H1 (cell line): ENCODE measurements at regions of chrX and their contacts with region 1.

Region 1: DNA sequence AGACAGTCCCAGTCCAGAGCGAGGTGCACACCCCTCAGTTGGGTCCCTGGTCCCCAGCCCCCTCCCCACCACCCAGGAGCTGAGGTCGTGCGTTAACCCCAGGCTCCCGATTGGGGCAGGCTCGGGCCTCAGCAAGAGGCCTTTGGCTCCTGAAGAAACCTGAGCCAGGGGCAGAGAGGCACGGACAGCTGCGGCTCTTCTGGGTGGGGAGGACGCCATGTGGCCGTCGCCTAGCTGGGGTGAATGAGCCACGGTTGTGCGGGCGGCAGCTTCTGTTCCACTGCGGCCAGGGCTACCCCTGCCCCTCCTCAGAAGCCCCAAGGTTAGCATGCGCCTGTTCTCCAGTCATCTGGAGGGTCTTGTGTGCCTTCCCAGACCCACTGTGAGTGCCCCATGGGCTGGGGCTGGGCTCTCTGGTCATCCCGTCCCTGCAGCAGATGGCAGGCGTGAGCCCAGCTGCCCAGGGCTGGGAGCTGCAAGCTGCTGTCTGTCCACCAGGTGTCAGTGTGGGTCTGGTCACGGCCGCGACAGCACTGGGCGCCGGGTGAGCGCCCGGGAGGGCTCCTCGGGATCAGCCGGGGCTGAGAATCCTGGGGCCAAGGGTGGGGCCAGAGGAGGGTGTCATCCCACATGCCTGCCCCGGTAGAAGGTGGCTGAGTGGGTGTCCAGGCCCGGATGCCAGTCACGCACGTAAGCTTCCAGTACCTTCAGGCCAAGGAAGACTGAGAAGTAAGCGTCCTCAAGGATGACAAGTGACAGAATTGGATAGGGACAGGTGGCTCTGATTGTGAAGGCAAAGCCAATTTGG is 21.9 kb downstream of the ATP2B3 start:
- DNase-seq: peak; percentile 31 to 84
- H3K4me3 ChIP-seq: no peak overlapping the region
- H3K27ac ChIP-seq: no peak overlapping the region
- H3K4me1 ChIP-seq: no peaks in the 10 kb centered on the region; a peak in 1 of 7 replicates
- H3K27me3 ChIP-seq: no peaks in the 10 kb centered on the region
- CTCF ChIP-seq: peak in 2 of 3 experiments; percentile 92 to 99; a peak in 3 of 4 replicates
- EP300 ChIP-seq: no peak
- POLR2A ChIP-seq: no peak
- RAD21 ChIP-seq: peak; percentile 66 to 81

Region 2: DNA sequence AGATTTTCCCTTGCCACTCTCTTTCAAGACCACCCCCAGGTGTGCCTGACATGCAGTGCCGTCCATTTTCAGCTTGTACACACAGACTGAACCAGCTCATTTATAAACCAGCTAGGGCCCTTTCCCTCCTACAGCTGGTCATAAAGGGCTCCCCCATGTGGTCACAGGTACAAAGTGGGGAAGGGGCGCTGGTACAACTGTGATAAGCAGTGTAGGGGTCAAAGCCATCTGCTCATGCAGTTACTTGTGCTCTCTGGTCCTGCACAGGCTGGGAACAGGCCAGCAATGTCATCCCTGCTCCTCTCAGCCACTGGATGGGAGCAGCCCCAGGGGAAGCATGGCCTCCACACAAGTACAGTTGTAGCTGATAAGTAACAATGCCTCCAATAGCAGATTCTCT is 881.1 kb before region 1 on chrX:
- CTCF ChIA-PET with region 1: no interaction called
- POLR2A ChIA-PET with region 1: no interaction called
- DNase-seq: peak in 1 of 2 experiments; percentile 48
- H3K4me3 ChIP-seq: no peak overlapping the region
- H3K27ac ChIP-seq: no peak overlapping the region
- H3K4me1 ChIP-seq: no peaks in the 10 kb centered on the region
- H3K27me3 ChIP-seq: no peaks in the 10 kb centered on the region
- CTCF ChIP-seq: peak; percentile 38 to 60 (median 59)
- EP300 ChIP-seq: no peak
- POLR2A ChIP-seq: no peak
- RAD21 ChIP-seq: peak; percentile 37 to 53; a peak in 3 of 4 replicates

Region 3: DNA sequence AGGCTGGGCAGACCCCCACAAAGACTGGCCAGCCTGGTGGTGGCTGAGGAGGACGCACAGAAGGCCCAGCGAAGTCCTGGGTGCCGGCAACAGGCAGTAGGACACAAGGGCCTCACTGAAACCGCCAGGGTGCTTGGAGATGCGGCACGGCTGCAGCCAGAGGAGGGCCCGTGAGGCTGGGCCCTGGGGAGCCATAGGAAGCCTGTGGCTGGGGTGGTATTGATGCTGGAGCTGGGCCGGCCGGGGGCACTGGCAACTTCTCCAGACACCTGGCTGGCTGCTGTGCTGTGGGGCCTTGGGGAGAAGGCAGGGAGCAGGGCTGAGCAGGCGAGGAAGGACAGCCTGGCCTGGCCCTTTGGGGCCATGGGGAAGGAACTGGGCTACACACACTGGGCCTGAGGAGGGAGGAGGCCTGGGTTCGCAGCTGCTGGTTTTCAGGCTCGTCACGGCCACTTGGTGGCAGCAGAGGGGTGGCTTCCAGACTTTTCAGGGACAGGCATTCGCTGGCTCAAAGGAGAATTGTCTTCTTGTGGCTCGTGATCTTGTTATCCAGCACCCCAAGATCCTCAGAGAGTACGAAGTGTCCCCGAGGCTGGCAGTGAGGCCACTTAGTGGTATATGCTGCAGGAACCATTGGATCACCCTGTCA is 15.3 kb after region 1 on chrX:
- CTCF ChIA-PET with region 1: interaction called, 19 read pairs
- POLR2A ChIA-PET with region 1: no interaction called
- DNase-seq: peak in 1 of 2 experiments; percentile 69
- H3K4me3 ChIP-seq: no peak overlapping the region
- H3K27ac ChIP-seq: no peak overlapping the region
- H3K4me1 ChIP-seq: no peaks in the 10 kb centered on the region
- H3K27me3 ChIP-seq: no peaks in the 10 kb centered on the region; a peak in 1 of 7 replicates
- CTCF ChIP-seq: peak in 2 of 3 experiments; percentile 74 to 76; a peak in 3 of 4 replicates
- EP300 ChIP-seq: no peak
- POLR2A ChIP-seq: no peak
- RAD21 ChIP-seq: peak; percentile 63 to 76

Region 4: DNA sequence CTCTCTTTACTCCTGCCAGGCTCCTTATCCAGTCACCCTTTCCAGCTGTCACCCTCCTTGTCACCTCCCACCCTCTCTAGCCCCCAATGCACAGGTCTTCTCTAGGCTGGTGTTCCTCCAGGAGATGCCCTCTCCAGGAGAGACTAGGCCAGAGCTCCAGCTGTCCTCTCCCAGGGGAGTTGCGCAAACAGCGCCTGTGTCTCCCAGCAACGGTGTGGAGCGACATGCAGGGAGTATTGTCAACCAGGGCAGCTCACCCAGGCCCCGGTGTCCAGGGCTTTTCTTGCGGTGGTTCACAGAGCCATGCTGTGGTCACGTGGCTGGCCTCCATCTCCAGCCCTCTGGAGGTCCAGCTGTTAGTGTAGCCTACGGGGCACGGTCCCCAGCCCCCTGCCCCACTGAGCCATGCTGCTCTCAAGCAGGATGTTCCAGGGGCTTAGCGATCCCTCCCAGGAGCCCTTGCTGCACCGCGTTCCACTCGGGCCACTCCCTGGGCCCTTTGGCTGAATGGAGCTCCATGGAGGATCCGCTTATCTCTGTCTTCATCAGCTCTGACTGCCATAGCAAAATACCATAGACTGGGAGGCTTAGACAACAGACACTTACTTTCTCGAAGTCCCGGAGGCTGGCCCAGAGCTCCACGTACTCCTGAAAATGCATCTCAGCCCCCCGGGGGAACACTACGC is 24.8 kb after region 1 on chrX:
- CTCF ChIA-PET with region 1: interaction called, 12 read pairs
- POLR2A ChIA-PET with region 1: no interaction called
- DNase-seq: no peak
- H3K4me3 ChIP-seq: no peak overlapping the region
- H3K27ac ChIP-seq: no peak overlapping the region
- H3K4me1 ChIP-seq: peaks cover 0 to 15% (median 5%) of the 10 kb centered on the region in 4 experiments; a peak in 5 of 7 replicates
- H3K27me3 ChIP-seq: no peaks in the 10 kb centered on the region; a peak in 1 of 7 replicates
- CTCF ChIP-seq: no peak
- EP300 ChIP-seq: no peak
- POLR2A ChIP-seq: no peak
- RAD21 ChIP-seq: no peak

Region 5: DNA sequence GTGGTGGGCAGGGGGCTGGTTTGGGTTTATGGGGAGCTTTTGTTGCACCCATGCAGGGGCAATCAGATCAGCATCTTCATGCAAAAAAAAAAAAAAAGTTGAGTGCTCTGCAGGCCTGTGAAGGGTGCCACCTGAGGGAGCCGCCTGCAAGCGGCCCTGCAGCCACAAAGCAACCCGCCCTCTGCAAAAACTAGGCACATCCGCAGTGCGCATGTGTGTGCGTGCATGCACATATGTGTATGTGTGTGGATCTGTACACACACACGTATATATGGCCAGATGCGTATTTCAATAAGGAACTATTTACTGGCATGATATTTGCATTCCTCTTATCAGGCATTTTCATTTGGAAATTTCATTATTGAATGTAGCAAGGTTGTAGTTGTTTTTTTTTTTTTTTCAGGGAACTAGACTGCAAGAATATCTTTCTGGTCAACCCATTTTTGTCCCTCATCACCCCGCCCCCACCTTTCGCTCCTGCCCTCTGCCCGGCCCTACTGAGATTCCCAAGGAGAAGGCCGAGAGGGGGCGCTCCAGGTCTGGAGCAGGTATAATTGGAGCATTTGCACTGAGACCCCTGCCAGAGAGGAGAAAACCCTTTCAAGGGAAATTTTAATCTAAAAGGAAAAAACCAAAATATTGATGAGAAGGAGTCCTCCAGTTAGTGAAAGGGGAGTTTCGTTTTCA is 41.5 kb after region 1 on chrX:
- CTCF ChIA-PET with region 1: interaction called, 16 read pairs
- POLR2A ChIA-PET with region 1: no interaction called
- DNase-seq: peak in 1 of 2 experiments; percentile 76
- H3K4me3 ChIP-seq: no peak overlapping the region
- H3K27ac ChIP-seq: no peak overlapping the region
- H3K4me1 ChIP-seq: peaks cover 0 to 11% (median 1%) of the 10 kb centered on the region in 4 experiments; a peak in 3 of 7 replicates
- H3K27me3 ChIP-seq: no peaks in the 10 kb centered on the region
- CTCF ChIP-seq: peak in 2 of 3 experiments; percentile 44 to 65; a peak in 3 of 4 replicates
- EP300 ChIP-seq: no peak
- POLR2A ChIP-seq: no peak
- RAD21 ChIP-seq: peak; percentile 34 to 53

Region 6: GRCh38 chrX:153794018-153794896 is 254.9 kb after region 1 on chrX and contains the starts of genes IDH3G and SSR4:
- CTCF ChIA-PET with region 1: no interaction called
- POLR2A ChIA-PET with region 1: no interaction called
- DNase-seq: peak; percentile 81 to 91
- H3K4me3 ChIP-seq: peak within 1 kb of the TSS; percentile 77 to 92 (median 83)
- H3K27ac ChIP-seq: peak within 1 kb of the TSS; percentile 96; the same call in 1 of the 2 replicates
- H3K4me1 ChIP-seq: peaks cover 0 to 17% (median 6%) of the 10 kb centered on the region in 4 experiments; a peak in 4 of 7 replicates
- H3K27me3 ChIP-seq: no peaks in the 10 kb centered on the region
- CTCF ChIP-seq: peak in 1 of 3 experiments; percentile 26; a peak in 1 of 4 replicates
- EP300 ChIP-seq: no peak
- POLR2A ChIP-seq: peak in 1 of 2 experiments; percentile 57; a peak in 2 of 3 replicates
- RAD21 ChIP-seq: no peak
- total RNA-seq, gene IDH3G: 36.1 and 39.4 TPM in 2 replicates
- total RNA-seq, gene SSR4: 161 and 168 TPM in 2 replicates

Region 7: GRCh38 chrX:153989973-153990655 is 450.7 kb after region 1 on chrX:
- CTCF ChIA-PET with region 1: no interaction called
- POLR2A ChIA-PET with region 1: no interaction called
- DNase-seq: no peak
- H3K4me3 ChIP-seq: no peak overlapping the region
- H3K27ac ChIP-seq: no peak overlapping the region
- H3K4me1 ChIP-seq: no peaks in the 10 kb centered on the region
- H3K27me3 ChIP-seq: no peaks in the 10 kb centered on the region
- CTCF ChIP-seq: no peak
- EP300 ChIP-seq: no peak
- POLR2A ChIP-seq: no peak
- RAD21 ChIP-seq: no peak